ENCODE measurements at regions of chr15 and their contacts with region 1.

Region 1: DNA sequence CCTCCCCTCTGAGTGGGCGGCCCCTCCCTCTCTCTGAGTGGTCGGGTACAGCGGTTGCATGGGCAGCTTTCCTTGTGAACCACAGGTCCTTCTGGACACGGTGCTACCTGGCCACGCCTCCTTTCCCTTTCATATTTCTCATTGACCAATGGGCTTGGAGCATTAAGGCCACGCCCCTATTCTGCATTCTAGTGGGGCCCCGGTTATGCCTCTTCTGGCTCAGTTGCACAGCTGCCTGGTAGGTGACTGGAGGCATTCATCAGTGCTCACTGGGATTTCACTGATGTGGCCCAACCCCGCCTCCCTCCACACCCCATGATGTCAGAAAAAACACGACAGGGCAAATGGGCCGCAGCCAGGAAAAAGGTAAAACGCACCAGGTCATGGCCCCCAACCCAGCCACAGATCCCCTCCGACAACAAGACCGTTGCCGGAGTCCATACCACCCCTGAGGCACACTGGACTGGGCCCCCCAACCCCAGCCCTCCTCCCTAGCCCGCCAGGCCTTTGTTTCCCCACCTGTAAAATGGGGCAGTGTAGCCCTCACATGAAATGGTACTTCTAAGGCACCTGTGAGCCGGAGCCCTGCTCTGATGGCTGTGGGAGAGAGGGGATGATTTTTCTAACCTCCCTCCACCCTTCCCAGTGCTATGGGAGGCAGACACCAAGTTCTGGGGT is 26.3 kb downstream of the NGRN start:
- DNase-seq: peak; percentile 28
- H3K4me3 Mint-ChIP-seq: no peak overlapping the region
- H3K27ac Mint-ChIP-seq: no peak overlapping the region
- H3K4me1 Mint-ChIP-seq: peaks cover 6% of the 10 kb centered on the region
- H3K27me3 Mint-ChIP-seq: no peaks in the 10 kb centered on the region

Region 2: GRCh38 chr15:90214553-90215196 is 77.1 kb before region 1 on chr15:
- CTCF ChIA-PET with region 1: no interaction called
- intact Hi-C with region 1: no loop called
- DNase-seq: no peak
- H3K4me3 Mint-ChIP-seq: no peak overlapping the region
- H3K27ac Mint-ChIP-seq: no peak overlapping the region
- H3K4me1 Mint-ChIP-seq: peaks cover 16% of the 10 kb centered on the region
- H3K27me3 Mint-ChIP-seq: no peaks in the 10 kb centered on the region

Region 3: GRCh38 chr15:90306560-90306959 is 14.7 kb after region 1 on chr15:
- CTCF ChIA-PET with region 1: interaction called, 22 read pairs
- intact Hi-C with region 1: no loop called
- DNase-seq: peak; percentile 68
- H3K4me3 Mint-ChIP-seq: no peak overlapping the region
- H3K27ac Mint-ChIP-seq: no peak overlapping the region
- H3K4me1 Mint-ChIP-seq: peaks cover 29% of the 10 kb centered on the region
- H3K27me3 Mint-ChIP-seq: no peaks in the 10 kb centered on the region

Region 4: GRCh38 chr15:90482124-90483011 is 190.6 kb after region 1 on chr15:
- CTCF ChIA-PET with region 1: interaction called, 12 read pairs
- intact Hi-C with region 1: loop called (anchors 1 kb)
- DNase-seq: peak; percentile 74
- H3K4me3 Mint-ChIP-seq: no peak overlapping the region
- H3K27ac Mint-ChIP-seq: no peak overlapping the region
- H3K4me1 Mint-ChIP-seq: peaks cover 16% of the 10 kb centered on the region
- H3K27me3 Mint-ChIP-seq: no peaks in the 10 kb centered on the region

Measured in activated naive CD4-positive, alpha-beta T cell treated with anti-CD3 and anti-CD28 coated beads for 36 hours (primary cell).